ENCODE measurements at regions of chr12 and their contacts with region 1.

Region 1: GRCh38 chr12:89019408-89020120 is 332.7 kb downstream of the DUSP6 start:
- DNase-seq: peak; percentile 72
- H3K4me3 ChIP-seq: peak overlapping the region; percentile 37 to 58
- H3K27ac ChIP-seq: peak overlapping the region in 1 of 2 experiments; percentile 45; a peak in 2 of 4 replicates
- H3K4me1 ChIP-seq: no peaks in the 10 kb centered on the region; a peak in 2 of 4 replicates
- H3K27me3 ChIP-seq: no peaks in the 10 kb centered on the region
- CTCF ChIP-seq: peak; percentile 89
- EP300 ChIP-seq: no peak
- RAD21 ChIP-seq: peak; percentile 97

Region 2: DNA sequence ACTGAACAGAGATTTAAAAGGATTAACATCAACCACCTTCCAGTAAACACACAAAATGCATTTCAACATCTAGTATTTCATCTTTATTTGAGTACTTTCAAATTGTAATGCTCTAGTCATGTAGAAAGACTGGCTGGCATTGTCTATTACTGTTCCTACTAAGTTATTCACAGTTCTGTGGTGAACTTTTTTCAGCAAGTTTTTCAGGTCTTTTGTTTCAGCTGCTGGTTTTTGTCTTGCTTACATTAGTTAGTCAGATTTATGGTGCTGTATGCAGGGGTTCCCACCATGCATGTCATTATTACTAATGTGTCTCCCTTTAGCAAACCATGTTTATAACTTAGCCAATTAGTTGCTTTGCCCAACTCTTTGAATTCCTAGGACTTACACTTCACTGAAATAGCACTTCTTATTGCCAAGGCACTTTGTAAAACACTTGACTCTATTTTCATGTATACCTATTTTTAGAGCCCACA is 185.9 kb before region 1 on chr12:
- CTCF ChIA-PET with region 1: no interaction called
- POLR2A ChIA-PET with region 1: no interaction called
- DNase-seq: no peak
- H3K4me3 ChIP-seq: no peak overlapping the region
- H3K27ac ChIP-seq: peak overlapping the region in 1 of 2 experiments; percentile 74; a peak in 2 of 4 replicates
- H3K4me1 ChIP-seq: no peaks in the 10 kb centered on the region
- H3K27me3 ChIP-seq: no peaks in the 10 kb centered on the region
- CTCF ChIP-seq: no peak
- EP300 ChIP-seq: no peak
- RAD21 ChIP-seq: no peak

Region 3: DNA sequence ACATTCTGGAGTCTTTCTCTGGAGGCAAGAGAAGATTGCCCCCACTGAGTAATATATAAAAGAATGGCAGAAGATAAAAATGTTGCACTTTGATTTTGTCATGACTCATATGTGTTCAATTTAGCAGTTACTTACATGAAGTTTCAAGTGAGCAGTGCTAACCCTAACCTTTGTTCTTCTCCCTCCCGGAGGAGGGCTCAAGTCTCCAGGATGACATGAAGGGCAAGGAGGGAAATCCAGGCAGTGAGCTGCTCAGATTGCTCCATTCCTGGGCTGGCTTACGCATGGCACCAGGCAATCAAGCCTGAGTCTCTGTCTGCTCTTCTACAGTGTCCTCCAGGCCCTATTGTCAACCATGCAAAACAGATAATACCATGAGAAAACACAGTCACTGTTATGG is 10.4 kb after region 1 on chr12:
- CTCF ChIA-PET with region 1: interaction called, 14 read pairs
- POLR2A ChIA-PET with region 1: no interaction called
- DNase-seq: no peak
- H3K4me3 ChIP-seq: no peak overlapping the region
- H3K27ac ChIP-seq: no peak overlapping the region
- H3K4me1 ChIP-seq: no peaks in the 10 kb centered on the region; a peak in 1 of 4 replicates
- H3K27me3 ChIP-seq: no peaks in the 10 kb centered on the region
- CTCF ChIP-seq: no peak
- EP300 ChIP-seq: no peak
- RAD21 ChIP-seq: no peak

Region 4: DNA sequence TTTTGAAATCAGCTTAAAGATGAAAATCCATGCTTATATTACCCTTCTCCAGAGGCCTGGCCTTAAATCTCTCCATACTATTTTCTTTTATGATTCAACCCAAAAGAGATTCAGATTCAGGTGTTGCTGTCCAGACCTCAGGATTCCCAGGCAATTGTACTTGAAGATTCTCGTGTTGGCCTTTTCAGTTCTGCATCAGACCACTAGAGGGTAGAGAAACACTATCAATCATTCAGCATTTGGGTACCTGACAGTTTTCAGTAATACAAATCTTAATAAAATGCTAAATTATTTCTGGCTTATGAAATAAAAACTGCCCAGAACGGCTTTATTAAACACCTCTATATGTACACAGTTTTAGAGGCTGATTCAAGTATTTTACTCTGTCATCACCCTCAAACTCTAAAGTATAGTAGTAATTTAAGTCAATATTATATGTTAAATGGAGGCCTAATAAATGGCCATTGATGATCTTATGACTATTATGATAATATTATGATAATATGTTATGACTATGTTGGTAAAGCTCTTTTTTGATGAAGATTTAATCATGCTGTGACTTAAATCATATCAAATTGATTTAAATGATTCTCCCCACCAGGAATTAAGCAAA is 31.6 kb after region 1 on chr12:
- CTCF ChIA-PET with region 1: interaction called, 13 read pairs
- POLR2A ChIA-PET with region 1: no interaction called
- DNase-seq: peak; percentile 61
- H3K4me3 ChIP-seq: no peak overlapping the region
- H3K27ac ChIP-seq: peak overlapping the region in 1 of 2 experiments; percentile 0; a peak in 2 of 4 replicates
- H3K4me1 ChIP-seq: peaks cover 3 to 10% of the 10 kb centered on the region in 2 experiments; a peak in 3 of 4 replicates
- H3K27me3 ChIP-seq: no peaks in the 10 kb centered on the region
- CTCF ChIP-seq: peak; percentile 93
- EP300 ChIP-seq: 0 out of 4 replicates have a peak, but pooled peaks of 1 of the 2 experiments have one; percentile 35
- RAD21 ChIP-seq: peak; percentile 99

Region 5: DNA sequence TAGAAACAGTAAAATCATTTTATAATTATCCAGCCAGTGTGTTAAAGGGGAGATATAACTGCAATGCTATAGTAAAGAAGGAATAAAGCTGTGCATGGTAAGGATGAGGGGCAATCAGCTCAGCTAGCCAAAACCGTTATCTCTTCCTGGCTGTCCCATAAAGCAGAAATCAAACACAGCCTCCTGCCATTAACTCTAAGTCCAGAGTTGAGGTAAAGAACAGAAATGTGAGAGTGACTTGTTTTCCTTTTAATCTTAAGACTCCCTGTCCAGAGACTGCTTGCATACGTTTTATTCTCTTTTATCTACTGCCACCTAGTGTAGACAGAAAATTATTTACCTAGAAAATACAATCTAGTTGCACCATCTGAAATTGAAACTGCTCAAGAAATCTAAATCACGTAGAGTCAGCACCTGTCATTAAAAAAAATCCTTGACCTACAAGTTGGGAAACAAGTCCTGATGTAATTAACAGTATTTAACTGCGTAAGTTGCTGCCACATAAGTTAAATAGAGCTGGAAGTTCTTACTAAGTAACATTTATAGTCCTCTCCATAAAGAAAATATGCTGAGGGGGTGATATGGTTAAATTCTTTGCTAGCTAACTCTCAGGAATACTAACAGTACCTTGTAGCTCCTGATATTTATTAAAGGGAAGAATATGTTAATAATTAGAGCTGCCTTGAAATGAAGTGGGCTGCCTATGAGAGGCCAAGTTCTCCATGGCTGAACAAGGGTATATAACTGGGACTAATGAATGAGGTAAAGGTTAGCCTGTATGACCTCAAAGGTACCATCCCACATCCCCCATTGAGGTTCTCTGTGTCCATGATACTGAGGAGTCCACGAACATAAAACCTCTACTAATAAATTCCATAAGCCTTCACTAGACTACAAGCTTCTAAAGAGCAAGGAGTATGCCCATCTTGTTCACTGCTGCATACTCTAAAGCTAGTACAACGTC is 442.4 kb after region 1 on chr12:
- CTCF ChIA-PET with region 1: interaction called, 235 read pairs
- POLR2A ChIA-PET with region 1: no interaction called
- DNase-seq: peak; percentile 36
- H3K4me3 ChIP-seq: peak overlapping the region in 1 of 2 experiments; percentile 20; a peak in 1 of 4 replicates
- H3K27ac ChIP-seq: peak overlapping the region; percentile 23 to 64; a peak in 3 of 4 replicates
- H3K4me1 ChIP-seq: peaks cover 9 to 11% of the 10 kb centered on the region in 2 experiments; a peak in 3 of 4 replicates
- H3K27me3 ChIP-seq: no peaks in the 10 kb centered on the region
- CTCF ChIP-seq: peak; percentile 68
- EP300 ChIP-seq: no peak
- RAD21 ChIP-seq: peak; percentile 94

Region 6: DNA sequence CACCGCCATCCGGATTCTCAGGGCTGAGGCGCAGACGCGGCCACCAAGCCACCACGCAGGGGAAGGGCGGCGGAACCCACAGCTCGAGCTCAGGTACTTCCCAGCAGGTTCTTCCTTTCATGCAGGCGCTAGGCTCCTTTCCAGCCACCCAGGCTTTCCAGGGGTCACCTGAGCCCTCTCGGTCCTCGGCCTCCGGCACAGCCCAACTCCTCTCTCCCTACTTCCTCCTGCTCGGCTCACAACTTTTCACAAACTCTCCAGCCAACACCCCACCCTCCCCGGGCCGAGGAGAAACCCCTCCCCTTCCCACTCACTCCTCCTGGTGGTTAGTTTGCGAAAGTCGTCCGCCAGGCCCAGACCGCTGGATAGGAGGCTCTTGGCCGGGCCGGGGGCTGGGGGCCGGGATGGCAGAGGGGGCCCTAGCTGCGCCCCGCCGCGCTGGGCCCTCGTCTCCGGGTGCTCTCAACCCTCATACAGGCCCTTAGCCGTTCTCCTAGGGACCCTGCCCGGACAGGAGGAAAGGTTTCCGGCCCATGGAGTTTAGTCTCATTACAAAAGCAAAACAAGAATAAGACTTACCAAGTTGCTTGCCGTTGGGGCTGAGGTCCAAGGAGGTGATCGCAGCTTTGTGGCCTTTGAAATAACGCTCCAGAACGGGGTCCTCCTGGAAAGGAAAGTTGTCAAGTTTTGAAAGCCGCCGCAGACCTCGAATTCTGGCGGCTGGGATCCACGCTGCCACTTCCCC is 505.1 kb after region 1 on chr12 and contains the start of gene GALNT4:
- CTCF ChIA-PET with region 1: interaction called, 172 read pairs
- POLR2A ChIA-PET with region 1: no interaction called
- DNase-seq: peak; percentile 93
- H3K4me3 ChIP-seq: peak within 1 kb of the TSS; percentile 97 to 99
- H3K27ac ChIP-seq: peak within 1 kb of the TSS; percentile 81 to 95
- H3K4me1 ChIP-seq: peaks cover 12 to 26% of the 10 kb centered on the region in 2 experiments
- H3K27me3 ChIP-seq: no peaks in the 10 kb centered on the region
- CTCF ChIP-seq: peak; percentile 72
- EP300 ChIP-seq: no peak
- RAD21 ChIP-seq: peak; percentile 59
- polyA plus RNA-seq, gene GALNT4: 1.1 and 1.4 TPM in 2 replicates